ENCODE measurements at regions of chr6 and their contacts with region 1.

Region 1: DNA sequence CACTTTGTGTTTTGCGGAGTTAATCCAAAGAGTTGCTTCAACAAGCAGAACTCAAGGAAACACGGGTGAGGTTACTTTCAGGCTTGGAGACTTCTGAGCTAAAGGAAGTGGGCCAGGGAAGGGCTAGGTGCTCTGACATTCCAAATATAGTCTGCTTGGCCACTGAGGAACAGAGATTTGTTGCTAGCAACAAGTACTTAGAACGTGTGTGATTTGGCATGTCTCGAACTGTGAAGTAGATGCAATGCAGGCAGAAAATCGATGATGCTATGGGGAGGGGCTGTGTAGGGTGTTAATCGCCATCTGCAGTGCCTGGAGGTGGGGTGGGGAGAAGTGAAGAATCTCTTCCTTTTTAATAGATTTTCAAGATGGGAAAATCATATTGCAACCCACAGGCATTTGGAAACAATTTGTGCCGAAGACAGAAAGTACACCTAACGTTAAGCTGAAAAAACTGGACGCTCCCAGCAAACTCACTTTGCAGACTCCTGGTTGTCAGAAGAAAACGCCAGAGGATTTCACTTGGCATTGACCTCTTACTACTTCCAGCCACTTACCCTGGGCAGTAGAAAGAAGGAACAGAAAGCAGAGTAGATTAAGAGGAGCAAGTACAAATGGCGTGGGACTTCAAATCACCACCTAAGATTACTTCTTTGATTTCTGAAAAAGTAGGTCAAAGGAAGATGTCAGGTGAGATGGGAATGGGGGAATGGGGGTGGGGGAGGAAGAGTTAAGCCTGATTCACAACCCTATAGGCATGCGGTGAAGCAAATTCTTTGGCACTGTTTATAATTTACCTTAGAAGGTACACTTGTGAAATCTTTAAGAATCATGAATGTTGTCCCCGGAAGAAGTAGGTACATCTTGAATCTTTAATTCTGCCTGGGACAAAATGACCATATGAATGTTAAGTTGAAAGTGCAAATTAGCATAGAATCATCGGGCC is 314.1 kb downstream of the CD83 start:
- DNase-seq: no peak
- ATAC-seq: peak; percentile 91

Region 2: GRCh38 chr6:14361297-14361696 is 70.4 kb before region 1 on chr6:
- intact Hi-C with region 1: loop called (anchors 5 kb)
- DNase-seq: no peak
- ATAC-seq: peak; percentile 88

Region 3: DNA sequence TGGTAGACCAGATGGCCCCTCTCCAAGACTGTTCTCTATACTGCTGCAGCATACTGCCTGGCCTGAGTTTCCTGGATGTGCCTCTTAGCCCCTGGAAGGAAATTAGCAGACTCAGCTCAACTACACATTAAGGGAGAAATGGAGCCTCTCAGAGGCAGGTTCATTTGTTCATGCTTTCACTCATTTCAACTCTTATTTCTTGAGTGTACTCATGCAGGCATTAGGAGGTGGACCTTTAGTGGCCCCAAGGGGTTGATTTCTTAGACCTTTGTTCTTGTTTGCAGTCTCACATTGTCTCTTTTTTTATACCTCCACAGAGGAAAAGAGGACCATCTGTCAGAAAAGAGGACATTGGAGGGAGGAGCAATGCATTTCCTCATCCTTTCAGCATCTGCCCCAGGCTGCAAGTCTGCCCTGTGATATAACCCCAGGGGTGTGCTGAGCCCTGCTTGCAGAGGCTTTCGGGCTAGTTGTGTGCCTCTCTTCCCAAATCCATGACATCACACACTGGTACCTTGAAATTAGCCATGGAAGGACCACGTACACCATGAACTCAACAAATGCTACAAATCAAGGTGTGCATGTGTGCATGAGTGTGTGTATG is 142.1 kb after region 1 on chr6:
- intact Hi-C with region 1: loop called (anchors 10 kb)
- DNase-seq: no peak
- ATAC-seq: no peak

Region 4: DNA sequence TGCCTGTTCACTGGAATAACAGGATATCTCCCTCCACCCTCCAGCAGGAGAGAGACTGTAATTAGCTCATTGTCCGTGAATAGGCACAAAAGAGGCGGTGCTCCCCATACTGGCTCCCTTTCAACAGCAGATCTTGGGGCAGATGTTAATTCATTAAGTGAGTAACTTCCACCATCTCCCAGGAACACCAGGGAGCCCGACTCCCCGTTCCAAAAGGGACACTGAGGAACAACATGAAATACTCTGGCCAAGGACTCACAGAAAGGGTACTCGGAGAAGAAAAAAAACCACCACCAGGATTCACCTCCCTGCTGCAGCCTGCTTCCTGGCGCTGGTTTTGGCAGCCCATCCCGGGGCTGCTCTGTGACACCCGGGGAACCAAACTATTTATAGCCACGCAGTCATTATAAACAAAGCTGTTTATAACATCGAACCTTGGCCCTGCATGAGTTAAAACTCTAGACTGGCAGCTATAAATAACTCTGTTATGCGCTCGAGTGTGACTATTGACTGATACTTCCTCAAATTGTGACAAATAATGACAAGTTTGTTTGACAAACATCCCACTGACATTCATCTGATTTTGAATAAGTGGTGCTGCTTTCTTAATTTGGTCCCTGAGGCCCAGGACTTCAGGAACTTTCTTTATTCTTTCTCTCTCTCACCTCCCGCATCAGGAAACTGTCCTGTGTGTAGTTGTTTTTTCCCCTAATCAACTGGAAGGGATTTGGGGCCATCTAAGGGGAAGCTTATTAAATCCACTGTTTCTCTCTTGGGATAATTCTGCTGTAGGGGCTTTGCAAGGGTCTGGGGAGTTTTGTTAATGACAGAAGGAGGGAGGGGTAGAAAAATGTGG is 207.5 kb after region 1 on chr6:
- intact Hi-C with region 1: loop called (anchors 5 kb)
- DNase-seq: peak; percentile 61
- ATAC-seq: peak; percentile 88

Measured in Right ventricle myocardium inferior (tissue), 1 donor.